PC-9 (cell line): ENCODE measurements at regions of chr12 and their contacts with region 1.

Region 1: DNA sequence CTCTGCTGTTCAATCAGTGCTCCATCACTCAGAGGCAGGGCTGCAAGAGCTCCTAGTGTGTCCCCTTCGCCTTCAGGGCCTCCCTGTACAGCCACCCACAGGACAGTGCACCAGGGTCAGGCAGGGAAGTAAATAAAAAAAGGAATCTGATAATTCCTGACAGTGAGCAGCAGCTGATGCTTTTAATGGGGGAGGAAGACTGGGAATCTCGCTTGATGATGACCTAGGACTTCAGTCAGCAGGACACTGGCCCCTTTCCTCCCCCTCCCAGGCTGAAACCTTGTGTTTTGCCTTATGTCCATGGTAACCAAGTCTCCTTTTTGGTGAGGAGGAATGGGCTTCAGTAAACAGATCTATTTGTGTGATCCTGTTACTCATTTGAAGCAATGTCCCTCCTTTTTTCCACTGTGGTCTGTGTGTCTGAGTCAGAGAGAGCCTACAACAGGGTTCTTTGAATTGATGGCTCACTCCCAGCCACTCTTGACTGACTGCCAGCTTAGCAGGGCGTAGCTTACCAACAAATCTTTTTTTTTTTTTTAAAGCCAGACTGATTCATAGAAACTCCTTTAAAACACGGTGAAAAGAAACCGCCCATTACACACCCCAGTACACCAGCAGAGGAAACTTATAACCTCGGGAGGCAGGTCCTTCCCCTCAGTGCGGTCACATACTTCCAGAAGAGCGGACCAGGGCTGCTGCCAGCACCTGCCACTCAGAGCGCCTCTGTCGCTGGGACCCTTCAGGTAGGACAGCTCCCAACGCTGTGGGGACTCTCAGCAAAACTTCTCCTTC is at the start of gene EMP1:
- DNase-seq: peak; percentile 96 to 100
- H3K4me3 ChIP-seq: peak within 1 kb of the TSS; percentile 97
- H3K27ac ChIP-seq: peak within 1 kb of the TSS; percentile 99
- H3K4me1 ChIP-seq: peaks cover 66% of the 10 kb centered on the region
- H3K27me3 ChIP-seq: no peaks in the 10 kb centered on the region
- CTCF ChIP-seq: no peak
- total RNA-seq, gene EMP1: 542 and 909 TPM in 2 replicates

Region 2: DNA sequence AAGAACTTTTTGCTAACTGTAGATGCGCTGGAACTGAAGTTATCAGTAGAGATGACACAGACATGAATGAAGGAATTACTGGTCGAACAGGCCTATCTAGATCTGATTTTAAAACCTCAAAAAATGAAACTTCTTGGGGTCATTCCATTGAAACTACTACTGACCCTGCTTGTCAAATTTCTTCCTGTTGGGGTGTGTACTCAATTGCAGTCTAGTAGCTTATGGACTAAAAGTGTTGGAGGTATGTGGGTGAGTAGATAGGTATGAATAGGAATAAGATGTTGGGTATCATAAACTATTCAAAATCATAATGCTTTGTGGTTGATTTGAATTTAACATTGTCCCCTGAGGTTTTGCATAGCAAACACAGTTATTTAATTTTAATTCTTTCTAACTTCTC is 401.6 kb before region 1 on chr12:
- CTCF ChIA-PET with region 1: no interaction called
- POLR2A ChIA-PET with region 1: interaction called, 12 read pairs
- intact Hi-C with region 1: no loop called
- DNase-seq: peak in 1 of 2 experiments; percentile 91
- H3K4me3 ChIP-seq: no peak overlapping the region
- H3K27ac ChIP-seq: peak overlapping the region; percentile 89
- H3K4me1 ChIP-seq: peaks cover 45% of the 10 kb centered on the region
- H3K27me3 ChIP-seq: no peaks in the 10 kb centered on the region
- CTCF ChIP-seq: no peak

Region 3: GRCh38 chr12:13124661-13125505 is 71.4 kb before region 1 on chr12:
- CTCF ChIA-PET with region 1: no interaction called
- POLR2A ChIA-PET with region 1: interaction called, 8 read pairs
- intact Hi-C with region 1: loop called (anchors 1 kb)
- DNase-seq: peak; percentile 66 to 93
- H3K4me3 ChIP-seq: no peak overlapping the region
- H3K27ac ChIP-seq: peak overlapping the region; percentile 41
- H3K4me1 ChIP-seq: peaks cover 45% of the 10 kb centered on the region
- H3K27me3 ChIP-seq: no peaks in the 10 kb centered on the region
- CTCF ChIP-seq: no peak

Region 4: GRCh38 chr12:13148064-13148847 is 48.1 kb before region 1 on chr12:
- CTCF ChIA-PET with region 1: no interaction called
- POLR2A ChIA-PET with region 1: no interaction called
- intact Hi-C with region 1: loop called (anchors 1 kb)
- DNase-seq: peak; percentile 68 to 84
- H3K4me3 ChIP-seq: no peak overlapping the region
- H3K27ac ChIP-seq: peak overlapping the region; percentile 43
- H3K4me1 ChIP-seq: peaks cover 38% of the 10 kb centered on the region
- H3K27me3 ChIP-seq: no peaks in the 10 kb centered on the region
- CTCF ChIP-seq: no peak

Region 5: DNA sequence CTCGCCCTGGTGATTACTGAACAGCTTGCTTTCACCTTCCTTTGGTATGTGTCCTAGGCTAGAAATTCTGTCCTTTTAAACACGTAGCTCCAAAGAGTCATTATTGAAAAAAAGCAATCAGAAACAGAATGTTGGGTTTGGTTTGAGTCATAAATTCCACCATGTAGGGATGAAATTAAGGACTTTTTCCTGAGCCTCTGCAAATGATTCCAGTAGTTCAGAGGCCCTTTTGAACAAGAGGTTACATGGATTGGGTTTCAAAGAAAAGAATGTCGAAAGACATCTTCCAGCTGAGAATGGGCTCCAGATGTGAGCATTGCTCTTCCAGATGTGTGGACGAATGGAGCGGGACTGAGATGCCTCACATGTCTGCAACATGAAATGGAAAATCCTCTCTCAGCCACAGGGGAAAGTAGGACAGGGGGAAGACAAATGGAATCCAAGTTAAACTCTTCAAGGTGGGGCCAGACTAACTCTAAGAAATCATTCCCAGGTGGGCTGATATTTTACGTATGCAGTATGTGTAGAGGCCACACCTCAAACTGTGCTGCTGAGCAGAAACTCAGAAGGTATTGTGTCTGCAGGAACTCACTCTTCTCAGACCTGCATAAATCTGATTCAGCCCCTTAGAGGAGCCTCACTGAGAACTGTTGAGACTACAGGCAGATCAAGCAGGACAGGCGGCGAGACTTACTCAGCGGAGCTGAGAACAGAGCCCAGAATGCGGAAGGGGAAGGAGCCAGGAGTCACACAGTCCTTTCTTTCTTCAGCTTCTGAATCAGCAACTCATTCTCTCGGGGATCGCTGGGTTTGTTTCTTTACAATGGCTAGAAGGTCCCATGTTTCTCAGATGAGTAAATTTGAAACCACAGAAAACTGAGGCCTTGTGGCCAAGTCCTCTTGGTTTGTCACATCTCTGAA is 23.1 kb before region 1 on chr12:
- CTCF ChIA-PET with region 1: interaction called, 4 read pairs
- POLR2A ChIA-PET with region 1: interaction called, 138 read pairs
- intact Hi-C with region 1: loop called (anchors 1 kb)
- DNase-seq: peak; percentile 93 to 97
- H3K4me3 ChIP-seq: peak overlapping the region; percentile 37; the same call in 1 of the 2 replicates
- H3K27ac ChIP-seq: peak overlapping the region; percentile 99
- H3K4me1 ChIP-seq: peaks cover 100% of the 10 kb centered on the region
- H3K27me3 ChIP-seq: no peaks in the 10 kb centered on the region
- CTCF ChIP-seq: no peak

Region 6: DNA sequence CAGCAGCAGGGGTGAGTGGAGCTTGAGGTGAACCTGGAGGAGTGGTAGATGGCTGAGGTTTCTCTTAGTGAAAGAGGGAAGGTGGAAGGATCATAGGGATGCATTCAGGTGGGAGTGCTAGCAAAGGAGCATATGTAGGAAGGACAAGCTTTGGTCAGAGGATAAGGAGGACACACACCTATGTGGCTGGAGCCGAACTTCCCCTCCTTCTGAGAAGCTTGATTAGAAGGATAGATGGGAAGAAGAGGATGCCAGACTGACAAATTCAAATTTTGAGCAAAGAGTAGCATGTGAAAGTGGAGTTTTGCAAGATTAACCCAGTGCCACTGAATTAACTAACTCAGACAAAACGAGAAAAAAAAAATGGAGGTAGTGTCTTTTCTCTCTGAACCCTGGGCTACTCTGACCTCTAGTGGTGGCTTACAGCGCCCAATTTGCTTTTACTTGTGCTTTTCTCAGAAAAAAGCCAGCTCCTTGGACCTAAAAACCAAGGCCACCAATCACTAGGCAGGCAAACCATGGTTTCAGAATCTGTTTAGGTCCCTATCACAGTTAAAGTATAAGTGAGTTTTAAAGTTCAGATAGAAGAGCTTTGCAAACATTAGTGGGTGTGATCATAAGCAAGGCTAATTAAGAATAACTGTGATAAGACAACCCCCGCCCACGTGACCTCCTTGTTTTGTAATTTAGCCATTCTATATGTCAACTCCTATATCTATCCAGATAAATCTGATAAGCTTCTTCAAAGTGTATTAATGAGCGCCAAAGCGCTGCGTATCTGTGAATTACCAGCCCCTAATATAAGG is 15.7 kb after region 1 on chr12:
- CTCF ChIA-PET with region 1: interaction called, 5 read pairs
- POLR2A ChIA-PET with region 1: interaction called, 17 read pairs
- intact Hi-C with region 1: no loop called
- DNase-seq: peak in 1 of 2 experiments; percentile 64
- H3K4me3 ChIP-seq: no peak overlapping the region
- H3K27ac ChIP-seq: peak overlapping the region; percentile 99
- H3K4me1 ChIP-seq: peaks cover 48% of the 10 kb centered on the region
- H3K27me3 ChIP-seq: no peaks in the 10 kb centered on the region
- CTCF ChIP-seq: peak; percentile 71